ENCODE measurements at regions of chr4 and their contacts with region 1.

Region 1: DNA sequence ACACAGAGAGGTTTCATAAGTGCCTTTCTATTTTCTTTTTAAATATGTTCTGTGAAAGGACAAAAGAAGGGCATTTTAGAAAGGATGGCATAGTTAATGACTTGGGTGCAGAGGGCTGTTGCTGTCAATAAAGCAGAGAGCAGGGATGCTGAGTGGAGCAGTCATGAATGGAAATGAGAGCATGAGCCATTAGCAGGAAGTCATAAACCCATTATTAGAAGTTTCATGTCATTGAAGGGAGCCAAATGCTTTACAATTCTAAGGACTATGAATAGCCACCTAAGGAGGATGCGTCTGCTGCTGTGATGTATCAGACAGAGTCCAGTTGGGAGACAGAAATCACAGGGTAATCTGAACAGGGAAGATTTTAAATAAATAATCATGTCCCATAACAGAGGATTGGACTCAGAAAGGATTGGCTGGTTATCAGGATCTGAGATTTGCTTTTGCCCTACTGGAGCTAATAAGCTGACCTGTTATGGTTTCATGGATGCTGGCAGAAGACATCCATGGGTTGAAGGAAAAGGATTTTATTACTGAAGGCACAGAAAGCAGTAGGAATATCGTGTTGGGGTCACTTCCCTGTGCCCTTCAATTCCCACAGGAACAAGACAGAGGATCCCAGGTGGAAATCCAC is 47.5 kb upstream of the WDR19 start:
- DNase-seq: no peak
- CTCF ChIP-seq: no peak

Region 2: DNA sequence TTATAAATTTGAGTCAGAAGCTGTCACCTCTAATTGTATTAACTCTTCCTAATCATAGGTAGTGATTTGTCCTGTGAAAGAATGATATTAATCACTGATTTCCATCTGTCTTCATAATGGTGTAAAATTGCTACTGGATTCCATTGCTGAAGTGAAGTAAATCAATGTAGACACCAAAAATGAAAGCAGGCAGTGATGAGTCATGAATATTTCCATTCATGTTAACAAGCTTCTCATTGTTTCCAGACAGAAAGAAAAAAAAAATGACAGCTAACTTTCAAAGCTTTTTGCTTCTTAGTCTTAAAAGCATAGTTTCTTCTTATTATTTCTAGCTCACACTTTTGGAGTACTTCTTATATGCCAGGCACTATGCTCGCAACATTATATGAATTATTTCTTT is 245.7 kb before region 1 on chr4:
- CTCF ChIA-PET with region 1: interaction called, 13 read pairs
- POLR2A ChIA-PET with region 1: no interaction called
- DNase-seq: peak; percentile 69
- CTCF ChIP-seq: no peak

Region 3: DNA sequence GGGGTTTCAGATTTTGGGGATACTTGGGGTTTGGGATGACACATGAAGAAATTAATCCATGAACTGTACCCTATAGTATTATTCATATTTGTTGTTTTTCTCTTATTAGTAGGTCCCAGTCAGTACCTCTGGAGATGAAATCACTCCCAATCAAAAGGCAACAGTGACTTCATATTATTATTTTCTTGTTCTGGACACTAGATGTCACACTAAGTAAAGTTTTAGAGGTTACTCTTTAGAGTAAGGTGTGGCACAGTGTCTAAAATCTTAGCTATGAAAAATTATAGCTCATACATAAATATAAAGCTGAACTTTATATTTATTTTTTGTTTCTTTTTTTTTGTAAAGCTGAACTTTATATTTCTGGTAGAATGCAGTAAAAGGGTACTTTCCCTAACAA is 232.1 kb before region 1 on chr4:
- CTCF ChIA-PET with region 1: interaction called, 77 read pairs
- POLR2A ChIA-PET with region 1: no interaction called
- DNase-seq: peak; percentile 56
- CTCF ChIP-seq: peak; percentile 40

Region 4: DNA sequence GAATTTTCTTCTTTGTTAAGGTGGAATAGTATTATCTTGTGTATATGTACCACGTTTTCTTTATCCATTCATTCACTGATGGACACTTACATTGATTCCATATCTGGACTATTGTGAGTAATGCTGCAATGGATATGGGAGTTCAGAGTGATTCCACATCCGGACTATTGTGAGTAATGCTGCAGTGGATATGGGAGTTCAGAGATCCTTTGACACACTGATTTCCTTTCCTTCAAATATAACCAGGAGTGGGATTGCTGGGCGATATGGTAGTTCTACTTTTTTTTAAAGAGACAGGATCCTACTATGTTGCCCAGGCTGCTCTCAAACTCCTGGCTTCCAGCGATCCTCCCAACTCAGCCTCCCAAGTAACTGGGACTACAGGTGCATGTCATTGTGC is 114.7 kb before region 1 on chr4:
- CTCF ChIA-PET with region 1: no interaction called
- POLR2A ChIA-PET with region 1: no interaction called
- DNase-seq: no peak
- CTCF ChIP-seq: no peak

Region 5: DNA sequence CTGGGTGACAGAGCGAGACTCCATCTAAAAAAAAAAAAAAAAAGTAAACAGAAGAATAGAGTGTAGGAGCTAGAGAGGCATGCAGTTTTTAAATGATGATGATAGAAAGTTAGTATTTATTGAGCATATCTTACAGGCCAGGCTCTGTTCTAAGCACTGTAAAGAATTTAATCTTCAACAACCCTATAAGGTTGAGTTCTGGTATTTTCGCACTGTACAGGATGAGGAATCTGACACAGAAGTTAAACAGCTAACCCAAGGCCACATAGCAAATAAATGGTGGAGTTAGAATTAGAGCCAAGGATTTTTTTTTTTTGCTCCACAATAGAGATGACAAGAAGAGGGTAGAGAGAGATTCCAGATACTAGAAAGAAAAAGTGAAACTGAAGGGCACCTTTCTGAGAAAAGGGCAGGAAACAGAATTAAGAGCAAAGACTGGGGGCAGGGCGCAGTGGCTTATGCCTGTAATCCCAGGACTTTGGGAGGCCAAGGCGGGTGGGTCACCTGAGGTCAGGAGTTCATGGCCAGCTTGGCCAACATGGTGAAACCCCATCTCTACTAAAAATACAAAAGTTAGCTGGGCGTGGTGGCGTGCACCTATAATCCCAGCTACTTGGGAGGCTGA is 16.7 kb before region 1 on chr4:
- CTCF ChIA-PET with region 1: interaction called, 27 read pairs
- POLR2A ChIA-PET with region 1: no interaction called
- DNase-seq: no peak
- CTCF ChIP-seq: no peak

Region 6: DNA sequence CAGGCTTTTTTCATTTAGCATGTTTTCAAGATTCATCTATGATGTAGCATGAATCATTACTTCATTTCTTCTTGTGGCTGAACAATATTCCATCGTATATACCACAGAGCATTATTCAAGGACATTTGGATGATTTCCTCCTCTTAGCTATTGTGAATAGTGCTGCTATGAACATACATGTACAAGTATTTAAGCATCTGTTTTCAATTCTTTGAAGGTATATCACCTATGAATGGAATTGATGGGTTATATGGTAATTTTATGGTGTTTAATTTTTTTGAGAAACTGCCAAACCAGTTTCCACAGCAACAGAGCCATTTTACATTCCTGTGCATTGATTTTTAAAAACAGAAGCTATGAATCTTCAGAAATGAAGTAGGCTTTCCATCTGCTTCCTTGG is 11.4 kb after region 1 on chr4:
- CTCF ChIA-PET with region 1: interaction called, 33 read pairs
- POLR2A ChIA-PET with region 1: no interaction called
- DNase-seq: no peak
- CTCF ChIP-seq: no peak

Region 7: DNA sequence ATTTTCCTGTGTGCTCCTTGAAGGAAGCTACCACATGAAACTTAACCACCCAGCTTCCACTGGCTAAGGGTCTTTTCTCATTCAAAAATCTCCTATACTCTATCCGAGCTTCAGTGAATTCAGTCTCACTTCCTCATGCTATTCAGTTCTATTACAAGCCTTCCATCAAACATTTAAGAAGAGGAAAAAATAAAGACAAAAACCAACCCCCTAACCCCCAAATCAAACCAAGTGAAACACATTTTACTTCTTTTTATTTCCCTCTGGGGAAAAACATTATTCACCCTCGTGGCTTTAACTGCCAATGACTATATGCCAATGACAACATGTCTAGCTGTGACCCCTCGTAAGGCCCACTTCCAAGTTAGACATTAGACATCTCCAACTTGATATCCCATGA is 31.4 kb after region 1 on chr4:
- CTCF ChIA-PET with region 1: interaction called, 10 read pairs
- POLR2A ChIA-PET with region 1: no interaction called
- DNase-seq: no peak
- CTCF ChIP-seq: no peak

Region 8: GRCh38 chr4:39181905-39182638 is 47.3 kb after region 1 on chr4 and contains the start of gene WDR19:
- CTCF ChIA-PET with region 1: interaction called, 14 read pairs
- POLR2A ChIA-PET with region 1: no interaction called
- DNase-seq: peak; percentile 97
- CTCF ChIP-seq: peak; percentile 52

Measured in GM10248 (cell line).